Activated T-helper 2 cell treated with anti-CD3 and anti-CD28 coated beads, Interferon-gamma antibody, Interleukin-2, Interleukin-4, amounts not matched to agents 10 μg/mL and 5 μg/mL and 100 μg/mL, durations not matched to agents 14 hours and 24 hours and 36 hours (primary cell): ENCODE measurements at regions of chr17 and their contacts with region 1.

Region 1: DNA sequence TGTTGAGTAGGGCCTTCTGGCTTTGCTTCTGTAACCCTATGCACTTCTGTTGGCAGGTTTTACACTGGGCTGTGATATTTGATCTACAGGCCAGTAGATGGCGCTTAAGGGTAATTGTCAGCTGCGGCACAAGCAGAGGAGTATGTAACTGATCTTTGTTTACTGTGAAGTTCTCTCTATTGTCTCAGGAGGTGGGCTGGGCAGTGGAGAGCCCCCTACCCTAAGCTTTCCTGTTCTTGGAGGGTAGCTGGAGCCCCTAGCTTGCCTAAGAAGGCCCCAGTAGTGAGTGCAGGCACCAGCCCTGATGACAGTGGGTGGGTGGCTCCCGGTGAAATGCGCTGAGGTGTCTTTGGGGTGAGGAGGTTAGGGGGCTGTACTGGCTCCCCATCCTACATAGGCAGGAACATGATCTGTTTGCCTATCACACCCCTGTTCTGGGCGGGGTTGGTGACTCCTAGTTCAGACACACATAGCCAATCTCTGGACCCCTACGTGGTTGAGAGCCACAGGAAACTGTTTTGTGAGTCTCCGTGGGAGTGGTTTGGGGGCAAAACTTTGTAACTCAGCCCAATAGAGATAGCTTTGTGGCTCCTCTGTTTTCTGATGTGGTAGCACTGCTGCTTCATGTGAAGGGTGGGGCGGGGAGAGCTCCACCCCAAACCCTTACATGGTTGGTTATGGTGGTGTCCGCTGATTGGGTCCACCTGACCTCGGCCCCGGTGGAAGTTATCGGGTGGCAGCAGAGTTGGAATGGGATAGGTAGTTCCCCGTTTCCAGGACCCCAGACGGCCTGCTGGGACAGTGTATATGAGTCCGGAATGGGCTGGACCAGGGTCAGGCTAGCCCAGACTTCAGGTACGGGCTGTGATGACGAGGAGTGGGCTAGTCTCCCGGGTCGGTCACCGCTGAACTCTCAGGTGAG is 60.4 kb downstream of the SLFN11 start:
- DNase-seq: peak; percentile 83
- H3K4me3 Mint-ChIP-seq: peak overlapping the region; percentile 92
- H3K27ac Mint-ChIP-seq: peak overlapping the region; percentile 94
- H3K4me1 Mint-ChIP-seq: peaks cover 46% of the 10 kb centered on the region
- H3K27me3 Mint-ChIP-seq: no peaks in the 10 kb centered on the region

Region 2: GRCh38 chr17:34913001-34913400 is 400.1 kb before region 1 on chr17:
- intact Hi-C with region 1: no loop called
- DNase-seq: no peak
- H3K4me3 Mint-ChIP-seq: no peak overlapping the region
- H3K27ac Mint-ChIP-seq: no peak overlapping the region
- H3K4me1 Mint-ChIP-seq: no peaks in the 10 kb centered on the region
- H3K27me3 Mint-ChIP-seq: peaks cover 6% of the 10 kb centered on the region

Region 3: GRCh38 chr17:35345926-35346771 is 33.1 kb after region 1 on chr17:
- intact Hi-C with region 1: loop called (anchors 2 kb)
- DNase-seq: no peak
- H3K4me3 Mint-ChIP-seq: peak overlapping the region; percentile 87
- H3K27ac Mint-ChIP-seq: peak overlapping the region; percentile 65
- H3K4me1 Mint-ChIP-seq: peaks cover 38% of the 10 kb centered on the region
- H3K27me3 Mint-ChIP-seq: peaks cover 10% of the 10 kb centered on the region

Region 4: GRCh38 chr17:35432176-35433074 is 119.4 kb after region 1 on chr17 and contains the start of gene SLFN12:
- intact Hi-C with region 1: loop called (anchors 2 kb)
- DNase-seq: peak; percentile 34
- H3K4me3 Mint-ChIP-seq: peak within 1 kb of the TSS; percentile 90
- H3K27ac Mint-ChIP-seq: peak within 1 kb of the TSS; percentile 94
- H3K4me1 Mint-ChIP-seq: peaks cover 51% of the 10 kb centered on the region
- H3K27me3 Mint-ChIP-seq: no peaks in the 10 kb centered on the region
- total RNA-seq, gene SLFN12: 7.5 and 8.8 TPM in 2 replicates

Region 5: GRCh38 chr17:35486920-35487732 is 174.1 kb after region 1 on chr17:
- intact Hi-C with region 1: loop called (anchors 2 kb)
- DNase-seq: peak; percentile 65
- H3K4me3 Mint-ChIP-seq: peak overlapping the region; percentile 83
- H3K27ac Mint-ChIP-seq: peak overlapping the region; percentile 94
- H3K4me1 Mint-ChIP-seq: peaks cover 49% of the 10 kb centered on the region
- H3K27me3 Mint-ChIP-seq: no peaks in the 10 kb centered on the region